SK-N-SH (cell line): ENCODE measurements at regions of chr9 and their contacts with region 1.

Region 1: DNA sequence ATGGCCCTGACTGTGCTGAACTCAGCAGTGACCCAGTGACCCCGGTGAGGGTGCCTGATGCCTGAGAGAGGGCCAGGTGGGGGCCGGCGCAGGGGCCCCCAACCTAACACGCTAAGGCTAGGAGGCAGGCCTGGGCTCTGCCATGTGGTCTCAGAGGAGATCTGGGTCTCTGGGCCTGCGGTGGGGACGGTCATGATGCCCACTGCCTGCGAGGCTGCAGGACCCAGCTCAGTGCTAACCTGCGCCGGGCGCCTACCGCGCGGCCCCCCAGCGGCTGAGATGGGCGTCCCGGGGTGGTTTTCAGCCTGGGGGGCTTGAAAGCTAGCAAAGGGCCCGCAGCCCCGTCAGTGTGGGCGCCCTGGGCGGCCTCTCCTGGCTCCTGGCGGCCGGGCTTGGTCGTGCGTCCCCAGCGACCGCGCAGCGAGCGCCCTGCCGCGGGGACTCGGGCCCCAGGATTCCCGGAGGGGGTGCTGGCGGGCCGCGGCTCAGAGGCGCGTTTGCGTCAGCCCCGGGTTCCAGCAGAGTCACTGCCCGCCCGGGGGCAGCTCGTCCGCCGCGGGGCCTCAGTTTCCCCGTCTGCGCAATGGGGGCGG is 2.5 kb downstream of the EGFL7 start:
- DNase-seq: peak; percentile 92
- H3K4me3 ChIP-seq: peak overlapping the region; percentile 56 to 62; a peak in 3 of 4 replicates
- H3K27ac ChIP-seq: no peak overlapping the region; a peak in 1 of 4 replicates
- H3K4me1 ChIP-seq: peaks cover 0 to 21% of the 10 kb centered on the region in 2 experiments; a peak in 1 of 4 replicates
- H3K27me3 ChIP-seq: no peaks in the 10 kb centered on the region
- CTCF ChIP-seq: peak; percentile 35; the same call in 1 of the 2 replicates
- EP300 ChIP-seq: no peak
- RAD21 ChIP-seq: 0 out of 2 replicates have a peak, but pooled peaks have one; percentile 12

Region 2: GRCh38 chr9:136631038-136632000 is 33.9 kb before region 1 on chr9:
- CTCF ChIA-PET with region 1: interaction called, 10 read pairs
- POLR2A ChIA-PET with region 1: no interaction called
- DNase-seq: peak; percentile 90
- H3K4me3 ChIP-seq: no peak overlapping the region; a peak in 1 of 4 replicates
- H3K27ac ChIP-seq: no peak overlapping the region
- H3K4me1 ChIP-seq: peaks cover 0 to 8% of the 10 kb centered on the region in 2 experiments; a peak in 1 of 4 replicates
- H3K27me3 ChIP-seq: peaks cover 15% of the 10 kb centered on the region
- CTCF ChIP-seq: peak; percentile 84
- EP300 ChIP-seq: no peak
- RAD21 ChIP-seq: peak; percentile 94

Region 3: DNA sequence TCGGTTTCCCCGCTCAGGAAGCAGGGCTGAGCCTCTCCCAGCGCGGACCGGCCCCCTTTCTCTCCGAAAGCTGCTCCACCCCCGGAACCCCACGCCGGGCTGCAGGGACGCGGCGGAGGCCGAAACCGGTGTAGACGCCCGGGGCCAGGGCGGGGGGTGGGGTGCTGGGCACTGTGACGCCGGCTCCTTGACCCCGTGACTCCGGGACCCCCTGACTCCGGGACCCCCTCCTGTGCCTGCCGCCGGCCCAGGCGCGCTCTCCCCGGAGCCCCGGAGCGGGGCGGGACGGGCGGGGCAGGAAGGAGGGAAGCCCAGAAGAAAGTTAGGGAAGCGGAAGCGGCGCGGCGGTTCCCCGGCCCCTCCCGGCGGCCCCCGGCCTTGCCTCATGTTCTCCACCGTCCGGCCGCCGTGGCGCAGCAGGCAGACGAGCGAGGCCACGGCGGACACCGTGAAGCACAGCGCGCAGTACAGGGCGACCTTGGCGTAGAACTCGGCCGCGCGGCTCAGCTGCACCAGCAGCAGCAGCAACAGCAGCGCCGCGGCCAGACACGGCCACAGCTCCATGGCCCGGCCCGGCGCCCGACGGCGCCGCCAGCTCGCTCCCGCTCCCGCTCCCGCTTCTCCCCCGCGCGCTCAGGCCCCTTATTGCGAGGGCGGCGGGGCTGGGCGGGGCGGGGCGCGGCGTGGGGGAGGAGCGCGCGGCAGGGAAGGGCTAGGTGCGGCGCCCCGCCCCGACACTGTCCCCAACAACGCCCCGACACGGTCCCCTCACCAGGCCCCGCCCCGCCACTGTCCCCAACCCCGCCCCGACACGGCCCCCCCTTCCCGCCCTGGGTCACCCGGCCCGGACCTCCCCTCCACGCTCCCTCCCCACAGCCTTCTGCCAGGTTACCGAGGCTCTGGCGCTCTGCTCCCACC is 21.8 kb after region 1 on chr9 and contains the start of gene AGPAT2:
- CTCF ChIA-PET with region 1: interaction called, 10 read pairs
- POLR2A ChIA-PET with region 1: no interaction called
- DNase-seq: peak; percentile 98
- H3K4me3 ChIP-seq: peak within 1 kb of the TSS; percentile 72 to 78
- H3K27ac ChIP-seq: peak within 1 kb of the TSS in 1 of 2 experiments; percentile 55; a peak in 1 of 4 replicates
- H3K4me1 ChIP-seq: peaks cover 4 to 19% of the 10 kb centered on the region in 2 experiments; a peak in 2 of 4 replicates
- H3K27me3 ChIP-seq: no peaks in the 10 kb centered on the region
- CTCF ChIP-seq: no peak
- EP300 ChIP-seq: no peak
- RAD21 ChIP-seq: no peak
- polyA plus RNA-seq, gene AGPAT2: 41.8 and 46.8 TPM in 2 replicates

Region 4: DNA sequence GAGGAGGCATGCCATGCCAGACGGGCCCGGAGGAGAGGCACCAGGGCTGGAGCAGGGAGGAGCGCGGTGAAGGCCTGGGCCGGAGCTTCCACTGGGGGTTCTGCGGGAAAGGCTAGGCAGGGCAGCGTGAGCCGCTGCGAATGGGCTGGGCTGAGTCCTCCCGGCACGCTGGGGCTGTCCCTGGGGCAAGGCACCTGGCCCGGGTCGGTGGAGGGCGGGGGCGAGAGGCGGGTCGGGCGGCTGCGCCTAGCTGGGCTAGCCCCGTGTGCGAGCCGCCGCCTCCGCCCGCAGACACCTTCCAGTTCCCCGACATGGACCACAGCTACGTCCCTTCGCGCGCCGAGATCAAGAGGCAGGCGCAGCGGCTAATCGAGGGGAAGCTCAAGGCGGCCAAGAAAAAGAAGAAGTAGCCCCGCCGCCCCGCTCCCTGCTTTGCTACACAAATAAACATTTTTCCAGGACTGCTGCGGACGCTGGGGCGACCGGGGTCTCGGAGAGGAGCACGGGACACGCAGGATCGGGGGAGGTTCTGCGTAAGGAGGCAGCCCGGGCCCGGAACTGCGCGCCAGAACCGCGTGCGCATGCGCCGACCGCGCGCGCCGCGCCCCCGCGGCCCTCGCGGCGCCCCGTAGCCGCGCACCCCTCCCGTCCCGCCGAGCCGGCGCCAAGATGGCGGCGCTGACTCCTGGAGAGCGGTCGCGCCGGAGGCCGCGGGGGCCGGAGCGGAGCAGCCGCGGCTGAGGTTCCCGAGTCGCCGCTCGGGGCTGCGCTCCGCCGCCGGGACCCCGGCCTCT is 142.3 kb after region 1 on chr9 and contains the start of gene RABL6:
- CTCF ChIA-PET with region 1: no interaction called
- POLR2A ChIA-PET with region 1: no interaction called
- DNase-seq: peak; percentile 99
- H3K4me3 ChIP-seq: peak within 1 kb of the TSS; percentile 79 to 96
- H3K27ac ChIP-seq: peak within 1 kb of the TSS; percentile 55 to 86; a peak in 3 of 4 replicates
- H3K4me1 ChIP-seq: peaks cover 20 to 22% of the 10 kb centered on the region in 2 experiments; a peak in 3 of 4 replicates
- H3K27me3 ChIP-seq: no peaks in the 10 kb centered on the region
- CTCF ChIP-seq: no peak
- EP300 ChIP-seq: no peak
- RAD21 ChIP-seq: no peak
- polyA plus RNA-seq, gene RABL6: 40.0 and 43.6 TPM in 2 replicates

Region 5: DNA sequence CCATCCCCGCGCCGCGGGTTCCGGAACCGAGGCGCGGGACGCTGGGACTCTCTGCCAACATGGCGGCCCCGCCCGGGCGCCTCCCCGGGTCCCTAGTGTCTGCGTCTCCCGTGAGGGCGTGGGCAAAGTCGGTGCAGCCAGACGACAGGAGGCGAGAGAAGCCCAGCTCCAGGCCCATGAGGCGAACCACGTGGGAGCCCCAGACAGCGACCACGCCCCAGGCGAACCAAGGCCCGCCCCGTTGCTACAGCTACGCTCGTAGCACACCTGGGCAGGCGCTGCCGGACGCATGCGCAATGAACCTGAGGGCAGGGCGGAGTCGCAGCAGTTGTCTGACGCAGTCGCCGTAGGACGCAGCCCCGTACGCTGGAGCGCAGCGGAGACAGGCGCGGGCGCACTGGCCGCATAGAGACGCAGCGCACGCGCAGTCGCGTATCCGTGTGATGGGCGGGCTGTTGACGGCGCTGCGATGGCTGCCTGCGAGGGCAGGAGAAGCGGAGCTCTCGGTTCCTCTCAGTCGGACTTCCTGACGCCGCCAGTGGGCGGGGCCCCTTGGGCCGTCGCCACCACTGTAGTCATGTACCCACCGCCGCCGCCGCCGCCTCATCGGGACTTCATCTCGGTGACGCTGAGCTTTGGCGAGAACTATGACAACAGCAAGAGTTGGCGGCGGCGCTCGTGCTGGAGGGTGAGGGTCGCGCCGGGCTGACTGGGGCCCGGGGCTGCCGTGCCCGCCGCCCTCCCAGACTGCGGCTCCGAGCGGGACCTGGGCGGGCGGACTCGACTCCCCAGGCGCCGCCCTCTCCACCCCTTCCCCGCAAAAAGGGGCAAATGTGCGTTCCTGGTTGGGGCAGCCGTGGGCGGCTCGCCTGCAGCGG is 421.6 kb after region 1 on chr9 and contains the start of gene MAN1B1:
- CTCF ChIA-PET with region 1: no interaction called
- POLR2A ChIA-PET with region 1: no interaction called
- DNase-seq: peak; percentile 98
- H3K4me3 ChIP-seq: peak within 1 kb of the TSS; percentile 80 to 93
- H3K27ac ChIP-seq: peak within 1 kb of the TSS; percentile 57 to 88
- H3K4me1 ChIP-seq: peaks cover 13 to 21% of the 10 kb centered on the region in 2 experiments
- H3K27me3 ChIP-seq: no peaks in the 10 kb centered on the region
- CTCF ChIP-seq: no peak
- EP300 ChIP-seq: no peak
- RAD21 ChIP-seq: no peak
- polyA plus RNA-seq, gene MAN1B1: 57.8 and 61.9 TPM in 2 replicates